Activated CD4-positive, alpha-beta memory T cell treated with anti-CD3 and anti-CD28 coated beads for 36 hours (primary cell): ENCODE measurements at regions of chr1 and their contacts with region 1.

Region 1: GRCh38 chr1:27136998-27137542 is 17.9 kb downstream of the SLC9A1 start:
- DNase-seq: peak; percentile 92
- H3K4me3 Mint-ChIP-seq: peak overlapping the region; percentile 91
- H3K27ac Mint-ChIP-seq: peak overlapping the region; percentile 99
- H3K4me1 Mint-ChIP-seq: peaks cover 40% of the 10 kb centered on the region
- H3K27me3 Mint-ChIP-seq: no peaks in the 10 kb centered on the region

Region 2: GRCh38 chr1:26900001-26900814 is 236.9 kb before region 1 on chr1 and contains the start of gene GPATCH3:
- CTCF ChIA-PET with region 1: no interaction called
- POLR2A ChIA-PET with region 1: no interaction called
- intact Hi-C with region 1: no loop called
- DNase-seq: peak; percentile 92
- H3K4me3 Mint-ChIP-seq: peak within 1 kb of the TSS; percentile 91
- H3K27ac Mint-ChIP-seq: peak within 1 kb of the TSS; percentile 96
- H3K4me1 Mint-ChIP-seq: peaks cover 22% of the 10 kb centered on the region
- H3K27me3 Mint-ChIP-seq: no peaks in the 10 kb centered on the region
- total RNA-seq, gene GPATCH3: 6.3 to 9.2 TPM

Region 3: DNA sequence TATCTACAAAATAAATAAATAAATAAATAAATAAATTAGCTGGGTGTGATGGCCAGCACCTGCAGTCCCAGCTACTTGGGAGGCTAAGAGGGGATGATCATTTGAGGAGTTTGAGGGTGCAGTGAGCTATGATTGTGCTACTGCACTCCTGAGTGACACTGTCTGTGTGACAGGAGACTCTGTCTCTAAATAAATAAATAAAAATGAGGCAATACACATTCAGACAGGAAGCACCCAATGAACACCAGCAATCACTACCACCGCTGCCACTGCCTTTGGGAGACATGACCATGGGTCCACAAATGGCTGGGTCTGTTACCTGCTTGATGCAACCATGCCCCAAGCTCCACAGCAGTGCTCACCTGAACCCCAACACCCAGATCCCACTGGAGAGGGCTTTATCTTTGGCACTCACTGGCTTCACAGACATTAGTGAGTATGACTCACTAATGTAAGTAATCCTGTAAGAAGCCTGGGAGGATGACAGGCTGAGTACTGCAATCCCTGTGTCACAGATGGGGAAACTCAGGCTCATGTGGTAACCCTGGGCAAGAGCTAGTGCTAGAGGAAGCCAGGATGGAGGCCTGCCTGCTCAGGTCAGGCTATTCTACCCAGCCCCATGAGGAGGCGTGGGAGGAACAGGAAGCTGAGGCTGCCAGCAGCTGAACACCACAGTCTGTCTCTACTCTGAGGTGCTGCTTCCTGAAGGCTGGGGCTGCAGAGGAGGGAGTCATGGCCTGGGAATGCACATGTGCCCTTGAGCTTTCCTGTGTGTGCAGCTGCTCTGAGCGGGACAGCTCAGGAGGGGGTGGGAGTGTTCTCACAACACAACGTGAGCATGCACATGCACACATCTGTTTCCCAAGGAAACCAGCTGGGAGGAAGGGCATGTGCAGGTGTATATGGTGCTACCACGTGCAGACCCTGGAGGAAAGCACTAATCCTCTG is 25.2 kb before region 1 on chr1:
- CTCF ChIA-PET with region 1: interaction called, 5 read pairs
- POLR2A ChIA-PET with region 1: interaction called, 15 read pairs
- intact Hi-C with region 1: loop called (anchors 2 kb)
- DNase-seq: peak; percentile 89
- H3K4me3 Mint-ChIP-seq: no peak overlapping the region
- H3K27ac Mint-ChIP-seq: peak overlapping the region; percentile 83
- H3K4me1 Mint-ChIP-seq: peaks cover 40% of the 10 kb centered on the region
- H3K27me3 Mint-ChIP-seq: no peaks in the 10 kb centered on the region